Right lobe of liver (tissue), 6 donors: ENCODE measurements at regions of chr17 and their contacts with region 1.

Region 1: GRCh38 chr17:64155751-64156544 is 26.0 kb upstream of the ERN1 start:
- DNase-seq: peak; percentile 65 to 93 (median 91)
- ATAC-seq: peak; percentile 89 to 97 (median 95)
- H3K4me3 ChIP-seq: no peak overlapping the region
- H3K27ac ChIP-seq: peak overlapping the region; percentile 70 to 91 (median 79)
- H3K4me1 ChIP-seq: peaks cover 0 to 59% (median 27%) of the 10 kb centered on the region in 4 donors
- H3K27me3 ChIP-seq: no peaks in the 10 kb centered on the region
- CTCF ChIP-seq: no peak
- POLR2A ChIP-seq: peak; percentile 64

Region 2: DNA sequence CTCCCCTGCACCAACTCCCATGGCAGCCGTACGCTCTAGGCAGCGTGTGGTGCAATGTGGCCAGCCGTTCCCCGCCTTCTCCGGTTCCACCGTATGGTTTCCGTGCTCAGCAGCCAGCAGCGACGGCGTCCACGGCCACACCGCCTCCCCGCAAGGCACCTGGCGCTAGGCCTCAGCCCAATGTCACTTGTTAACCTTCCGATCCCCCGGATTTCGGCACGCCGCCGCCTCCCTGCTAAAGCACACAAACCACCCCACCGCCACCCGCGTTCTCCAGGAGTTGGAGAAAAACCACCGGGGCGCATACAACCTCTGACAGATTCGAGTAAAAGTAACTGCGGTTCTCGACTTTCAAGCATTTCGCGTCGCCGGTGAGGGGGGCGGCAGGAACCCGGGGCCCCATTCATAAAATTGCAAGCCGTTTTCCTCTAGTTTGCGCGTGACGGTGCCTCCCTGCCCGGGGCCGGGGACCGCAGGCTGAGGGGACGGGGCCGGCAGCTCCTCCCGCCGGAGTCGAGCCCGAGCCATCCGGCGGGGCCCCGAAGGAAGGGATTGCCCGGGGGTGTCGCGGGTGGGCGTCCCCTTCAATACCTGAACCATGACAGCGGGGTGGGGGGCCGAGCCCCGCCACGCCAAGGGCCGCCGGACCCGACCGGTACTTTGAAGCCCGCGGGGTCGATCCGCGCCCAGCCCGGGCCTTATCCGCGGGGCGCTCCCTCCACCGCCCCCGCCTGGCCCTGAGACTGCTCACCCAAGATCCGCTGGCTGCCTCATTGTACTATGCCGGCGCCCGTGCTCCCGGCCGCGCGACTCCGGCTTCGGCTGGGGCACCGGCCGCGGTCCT is 106.7 kb after region 1 on chr17 and contains the start of gene TEX2:
- intact Hi-C with region 1: loop called in 1 of 2 experiments (anchors 10 kb)
- DNase-seq: peak; percentile 79 to 89 (median 88)
- ATAC-seq: peak; percentile 53 to 72 (median 68)
- H3K4me3 ChIP-seq: peak within 1 kb of the TSS; percentile 90 to 96 (median 96)
- H3K27ac ChIP-seq: peak within 1 kb of the TSS; percentile 67 to 85 (median 80)
- H3K4me1 ChIP-seq: peaks cover 0 to 37% (median 20%) of the 10 kb centered on the region in 4 donors
- H3K27me3 ChIP-seq: no peaks in the 10 kb centered on the region
- CTCF ChIP-seq: no peak
- POLR2A ChIP-seq: peak; percentile 80
- total RNA-seq, gene TEX2: 29.1 to 46.6 (median 33.7) TPM

Region 3: GRCh38 chr17:64281962-64282727 is 126.2 kb after region 1 on chr17:
- intact Hi-C with region 1: loop called in 1 of 2 experiments (anchors 10 kb)
- DNase-seq: peak; percentile 50 to 61 (median 61)
- ATAC-seq: peak; percentile 75 to 89 (median 80)
- H3K4me3 ChIP-seq: no peak overlapping the region
- H3K27ac ChIP-seq: no peak overlapping the region
- H3K4me1 ChIP-seq: no peaks in the 10 kb centered on the region
- H3K27me3 ChIP-seq: no peaks in the 10 kb centered on the region
- CTCF ChIP-seq: peak; percentile 67 to 81 (median 78)
- POLR2A ChIP-seq: no peak